Head of caudate nucleus (tissue), 42 donors: ENCODE measurements at regions of chr1 and their contacts with region 1.

Region 1: GRCh38 chr1:45583264-45583665 is 576 bp upstream of the NASP start:
- DNase-seq: peak; percentile 84 to 99 (median 97)

Region 2: DNA sequence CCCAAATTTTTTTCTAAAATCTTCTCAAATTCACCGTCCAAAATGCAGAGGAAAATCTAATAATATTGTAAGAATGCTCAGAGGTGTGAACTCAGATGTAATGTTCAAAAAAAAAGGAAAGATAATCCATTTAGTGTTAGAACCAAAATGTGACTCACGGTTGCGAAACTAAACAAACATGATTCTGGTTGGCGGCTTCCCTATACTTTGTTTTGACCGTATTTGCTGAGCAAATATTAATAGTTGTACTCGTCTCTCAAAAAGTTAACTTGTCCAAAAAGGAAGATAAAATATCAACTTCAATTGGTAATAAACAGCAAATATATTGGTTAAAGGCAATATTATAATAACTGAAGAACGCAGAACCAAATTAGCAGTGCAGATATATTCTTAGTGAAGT is 411.2 kb before region 1 on chr1:
- intact Hi-C with region 1: no loop called
- DNase-seq: no peak

Region 3: DNA sequence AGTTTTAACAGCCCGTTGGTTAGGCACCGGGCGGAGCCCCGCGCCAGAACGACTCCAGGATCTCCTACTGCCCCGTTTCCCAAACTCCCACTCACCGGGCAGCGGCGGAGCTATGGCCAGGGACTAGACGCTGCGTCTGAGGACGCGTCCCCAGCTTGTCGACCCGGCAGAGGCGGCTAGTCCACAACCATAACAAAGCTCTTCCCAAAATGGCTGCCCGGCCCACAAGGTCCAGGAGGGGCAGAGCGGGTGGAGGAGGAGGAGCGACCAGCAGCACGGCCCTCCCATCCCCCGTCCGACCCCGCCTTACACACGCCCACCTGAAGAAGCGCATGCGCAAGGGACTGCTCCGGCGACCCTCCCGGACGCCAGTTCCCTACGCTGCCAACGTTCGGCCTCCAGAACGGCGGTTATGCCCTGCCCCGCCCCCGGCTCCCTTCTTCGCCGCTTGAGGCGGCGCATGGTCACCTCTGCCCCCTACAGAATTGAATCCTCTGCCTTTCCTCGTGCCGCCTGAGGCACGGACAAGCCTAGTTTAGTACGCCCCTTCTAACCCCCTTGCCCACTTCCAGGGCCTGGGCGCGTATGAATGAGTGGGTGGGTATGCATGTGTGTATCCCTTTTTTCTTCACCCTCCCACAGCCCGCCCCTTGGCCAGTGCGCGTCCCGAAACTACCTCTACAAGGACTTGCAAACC is 103.2 kb after region 1 on chr1 and contains the start of gene GPBP1L1:
- intact Hi-C with region 1: loop called (anchors 5 kb)
- DNase-seq: peak; percentile 93 to 99 (median 98)